ENCODE measurements at regions of chr16 and their contacts with region 1.

Region 1: GRCh38 chr16:52611817-52612673 is 65.1 kb upstream of the TOX3 start:
- DNase-seq: no peak
- ATAC-seq: no peak
- H3K4me3 ChIP-seq: no peak overlapping the region
- H3K27ac ChIP-seq: no peak overlapping the region
- H3K4me1 ChIP-seq: no peaks in the 10 kb centered on the region
- H3K27me3 ChIP-seq: no peaks in the 10 kb centered on the region
- CTCF ChIP-seq: no peak
- EP300 ChIP-seq: no peak
- POLR2A ChIP-seq: no peak
- RAD21 ChIP-seq: no peak

Region 2: DNA sequence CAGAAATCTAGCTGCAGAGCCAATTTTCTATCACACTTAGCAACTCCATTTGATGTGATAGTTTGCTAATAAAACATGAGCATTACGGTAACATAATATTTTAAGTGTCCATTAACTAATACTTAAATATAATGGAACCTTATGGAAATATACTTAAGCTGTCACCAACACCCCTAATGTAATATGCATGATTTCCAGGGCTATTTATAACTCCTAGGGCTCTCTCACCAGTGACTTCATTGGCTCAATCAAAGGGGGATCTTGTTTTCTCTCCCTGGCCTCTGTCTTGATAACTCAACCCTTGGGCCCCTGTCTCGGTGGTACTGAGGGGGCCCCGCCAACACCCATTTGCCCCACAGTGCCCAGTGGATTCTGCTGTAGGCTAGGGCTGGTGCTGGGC is 1631.4 kb before region 1 on chr16:
- CTCF ChIA-PET with region 1: no interaction called
- POLR2A ChIA-PET with region 1: no interaction called
- RAD21 ChIA-PET with region 1: no interaction called
- SMC1A ChIA-PET with region 1: no interaction called
- in situ Hi-C with region 1: no loop called
- intact Hi-C with region 1: loop called (anchors 5 kb)
- DNase-seq: no peak
- ATAC-seq: no peak
- H3K4me3 ChIP-seq: no peak overlapping the region
- H3K27ac ChIP-seq: no peak overlapping the region
- H3K4me1 ChIP-seq: no peaks in the 10 kb centered on the region
- H3K27me3 ChIP-seq: no peaks in the 10 kb centered on the region
- CTCF ChIP-seq: no peak
- EP300 ChIP-seq: no peak
- POLR2A ChIP-seq: no peak
- RAD21 ChIP-seq: no peak